H1 (cell line): ENCODE measurements at regions of chr3 and their contacts with region 1.

Region 1: GRCh38 chr3:46663591-46664135 is 29.8 kb downstream of the ALS2CL start:
- DNase-seq: peak in 1 of 2 experiments; percentile 62
- H3K4me3 ChIP-seq: no peak overlapping the region
- H3K27ac ChIP-seq: no peak overlapping the region
- H3K4me1 ChIP-seq: peaks cover 22 to 41% (median 28%) of the 10 kb centered on the region in 4 experiments
- H3K27me3 ChIP-seq: no peaks in the 10 kb centered on the region; a peak in 1 of 7 replicates
- CTCF ChIP-seq: peak in 2 of 3 experiments; percentile 63 to 70; a peak in 3 of 4 replicates
- EP300 ChIP-seq: no peak
- POLR2A ChIP-seq: no peak
- RAD21 ChIP-seq: peak; percentile 72 to 83

Region 2: GRCh38 chr3:46478341-46478740 is 185.3 kb before region 1 on chr3:
- CTCF ChIA-PET with region 1: no interaction called
- POLR2A ChIA-PET with region 1: no interaction called
- DNase-seq: no peak
- H3K4me3 ChIP-seq: no peak overlapping the region
- H3K27ac ChIP-seq: no peak overlapping the region
- H3K4me1 ChIP-seq: no peaks in the 10 kb centered on the region
- H3K27me3 ChIP-seq: no peaks in the 10 kb centered on the region; a peak in 1 of 7 replicates
- CTCF ChIP-seq: no peak
- EP300 ChIP-seq: no peak
- POLR2A ChIP-seq: no peak
- RAD21 ChIP-seq: no peak

Region 3: GRCh38 chr3:46496741-46497554 is 166.7 kb before region 1 on chr3:
- CTCF ChIA-PET with region 1: interaction called, 10 read pairs
- POLR2A ChIA-PET with region 1: interaction called, 3 read pairs
- DNase-seq: peak; percentile 36 to 75
- H3K4me3 ChIP-seq: no peak overlapping the region
- H3K27ac ChIP-seq: no peak overlapping the region
- H3K4me1 ChIP-seq: peaks cover 0 to 7% (median 1%) of the 10 kb centered on the region in 4 experiments; a peak in 2 of 7 replicates
- H3K27me3 ChIP-seq: peaks cover 0 to 4% (median 0%) of the 10 kb centered on the region in 4 experiments; a peak in 1 of 7 replicates
- CTCF ChIP-seq: peak; percentile 41 to 68 (median 60)
- EP300 ChIP-seq: no peak
- POLR2A ChIP-seq: no peak
- RAD21 ChIP-seq: peak; percentile 58 to 69

Region 4: DNA sequence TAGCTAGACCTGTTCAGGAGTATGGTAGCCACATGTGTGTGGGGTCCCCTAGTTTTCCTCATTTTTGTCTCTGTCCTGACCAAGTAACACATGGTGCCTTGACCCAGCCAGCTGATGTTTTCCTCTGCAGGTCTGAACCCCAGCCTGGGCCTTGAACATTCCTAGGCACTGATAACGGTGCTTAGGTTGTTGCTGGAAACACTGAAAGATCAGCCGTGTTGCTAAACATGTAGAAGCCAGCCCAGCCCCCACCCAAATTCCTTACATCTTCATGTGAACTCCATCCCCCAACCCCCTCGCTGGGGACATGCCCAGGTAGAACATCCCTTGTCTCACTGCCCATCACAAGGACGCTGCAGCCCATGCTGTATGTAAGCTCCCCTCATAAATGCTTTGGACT is 147.1 kb before region 1 on chr3:
- CTCF ChIA-PET with region 1: no interaction called
- POLR2A ChIA-PET with region 1: no interaction called
- DNase-seq: no peak
- H3K4me3 ChIP-seq: no peak overlapping the region
- H3K27ac ChIP-seq: no peak overlapping the region
- H3K4me1 ChIP-seq: no peaks in the 10 kb centered on the region
- H3K27me3 ChIP-seq: no peaks in the 10 kb centered on the region
- CTCF ChIP-seq: no peak
- EP300 ChIP-seq: no peak
- POLR2A ChIP-seq: no peak
- RAD21 ChIP-seq: no peak

Region 5: DNA sequence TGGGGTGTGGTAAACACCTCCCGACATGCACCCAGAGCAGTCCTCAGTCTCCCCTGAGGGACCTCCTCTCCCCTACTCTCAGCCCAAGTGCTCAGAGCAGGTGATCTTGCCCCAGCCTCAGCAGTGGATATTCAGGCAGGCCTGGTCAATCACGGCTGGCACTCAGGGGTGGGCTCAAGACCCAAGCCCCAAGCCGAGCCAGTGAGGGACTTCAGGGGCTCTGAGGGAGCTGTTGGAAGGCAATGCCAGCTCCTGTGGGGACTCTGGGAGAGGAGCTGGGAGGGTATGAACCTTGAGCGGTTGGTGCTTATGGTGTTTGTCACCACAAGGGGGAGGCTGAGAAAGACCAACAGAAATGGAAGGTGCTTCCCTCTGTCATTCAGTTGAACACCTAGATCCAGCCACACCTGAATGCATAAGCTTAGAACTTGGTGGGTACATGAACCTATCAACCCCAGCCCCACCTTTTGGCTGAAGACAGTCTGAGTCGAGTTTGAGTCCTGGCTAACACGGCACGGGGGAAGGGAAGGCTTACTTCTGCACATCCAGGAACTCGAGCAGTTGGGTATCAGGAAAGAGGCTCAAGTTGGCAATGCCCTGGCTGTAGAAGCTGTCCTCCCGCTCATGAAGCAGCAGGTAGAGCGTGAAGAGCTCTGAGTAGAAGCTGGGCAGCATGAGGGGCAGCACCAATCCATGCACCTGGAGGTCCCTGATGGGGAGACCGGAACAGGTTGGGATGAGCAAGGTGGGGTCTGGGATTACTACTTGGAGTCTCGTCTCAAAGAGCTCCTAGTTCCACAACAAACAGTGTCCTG is 10.6 kb after region 1 on chr3:
- CTCF ChIA-PET with region 1: interaction called, 32 read pairs
- POLR2A ChIA-PET with region 1: interaction called, 3 read pairs
- DNase-seq: no peak
- H3K4me3 ChIP-seq: no peak overlapping the region
- H3K27ac ChIP-seq: no peak overlapping the region
- H3K4me1 ChIP-seq: no peaks in the 10 kb centered on the region; a peak in 1 of 7 replicates
- H3K27me3 ChIP-seq: no peaks in the 10 kb centered on the region
- CTCF ChIP-seq: peak in 2 of 3 experiments; percentile 30 to 53; a peak in 2 of 4 replicates
- EP300 ChIP-seq: no peak
- POLR2A ChIP-seq: no peak
- RAD21 ChIP-seq: peak; percentile 1 to 35; a peak in 1 of 4 replicates

Region 6: GRCh38 chr3:46681856-46682540 is 18.3 kb after region 1 on chr3:
- CTCF ChIA-PET with region 1: interaction called, 41 read pairs
- POLR2A ChIA-PET with region 1: interaction called, 3 read pairs
- DNase-seq: no peak
- H3K4me3 ChIP-seq: no peak overlapping the region
- H3K27ac ChIP-seq: no peak overlapping the region
- H3K4me1 ChIP-seq: peaks cover 0 to 3% (median 0%) of the 10 kb centered on the region in 4 experiments; a peak in 1 of 7 replicates
- H3K27me3 ChIP-seq: no peaks in the 10 kb centered on the region
- CTCF ChIP-seq: no peak
- EP300 ChIP-seq: no peak
- POLR2A ChIP-seq: no peak
- RAD21 ChIP-seq: no peak